Pancreas (tissue), 10 donors: ENCODE measurements at regions of chr9 and their contacts with region 1.

Region 1: DNA sequence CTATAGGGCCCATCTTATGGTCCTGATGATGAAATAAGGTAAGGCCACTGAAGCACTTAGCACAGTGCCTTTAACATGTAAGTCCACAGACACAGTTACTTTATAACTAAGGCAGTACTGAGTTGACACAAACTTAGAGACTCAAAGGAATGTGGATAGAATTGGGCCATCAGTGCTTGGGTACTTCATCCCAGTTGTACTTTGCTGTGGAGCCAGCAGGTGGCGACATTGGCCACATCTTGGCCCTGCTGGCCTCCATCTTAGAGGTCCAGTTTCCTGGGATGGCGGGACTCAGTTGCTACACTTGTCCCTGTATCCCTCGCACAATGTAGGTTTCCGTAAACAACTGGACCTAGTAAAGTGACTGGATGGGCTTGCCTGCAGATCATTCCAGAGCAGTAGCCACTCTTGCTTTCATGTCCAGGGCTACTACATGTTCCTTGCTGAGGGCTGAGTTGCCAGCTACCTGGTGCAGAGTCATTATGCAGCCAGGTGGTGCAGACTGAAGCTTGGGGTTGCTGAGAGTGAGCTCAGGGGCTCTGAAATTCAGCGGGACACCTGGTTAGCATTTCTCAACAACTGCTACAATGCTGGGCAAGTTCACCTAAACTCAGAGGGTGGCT is 10.6 kb downstream of the MTAP start:
- DNase-seq: peak; percentile 54 to 86 (median 78)
- ATAC-seq: peak; percentile 93 to 96 (median 96)
- H3K4me3 ChIP-seq: no peak overlapping the region
- H3K27ac ChIP-seq: no peak overlapping the region
- H3K4me1 ChIP-seq: peaks cover 0 to 13% (median 7%) of the 10 kb centered on the region in 3 donors
- H3K27me3 ChIP-seq: no peaks in the 10 kb centered on the region
- CTCF ChIP-seq: peak; percentile 75 to 85 (median 80)

Region 2: GRCh38 chr9:21965401-21965951 is 152.4 kb after region 1 on chr9:
- intact Hi-C with region 1: no loop called
- DNase-seq: peak; percentile 28 to 83 (median 58)
- ATAC-seq: peak; percentile 88 to 94 (median 92)
- H3K4me3 ChIP-seq: peak overlapping the region in 3 of 4 donors; percentile 0 to 45 (median 25)
- H3K27ac ChIP-seq: no peak overlapping the region
- H3K4me1 ChIP-seq: peaks cover 0 to 9% (median 0%) of the 10 kb centered on the region in 3 donors
- H3K27me3 ChIP-seq: peaks cover 6 to 65% (median 17%) of the 10 kb centered on the region in 4 donors
- CTCF ChIP-seq: no peak

Region 3: DNA sequence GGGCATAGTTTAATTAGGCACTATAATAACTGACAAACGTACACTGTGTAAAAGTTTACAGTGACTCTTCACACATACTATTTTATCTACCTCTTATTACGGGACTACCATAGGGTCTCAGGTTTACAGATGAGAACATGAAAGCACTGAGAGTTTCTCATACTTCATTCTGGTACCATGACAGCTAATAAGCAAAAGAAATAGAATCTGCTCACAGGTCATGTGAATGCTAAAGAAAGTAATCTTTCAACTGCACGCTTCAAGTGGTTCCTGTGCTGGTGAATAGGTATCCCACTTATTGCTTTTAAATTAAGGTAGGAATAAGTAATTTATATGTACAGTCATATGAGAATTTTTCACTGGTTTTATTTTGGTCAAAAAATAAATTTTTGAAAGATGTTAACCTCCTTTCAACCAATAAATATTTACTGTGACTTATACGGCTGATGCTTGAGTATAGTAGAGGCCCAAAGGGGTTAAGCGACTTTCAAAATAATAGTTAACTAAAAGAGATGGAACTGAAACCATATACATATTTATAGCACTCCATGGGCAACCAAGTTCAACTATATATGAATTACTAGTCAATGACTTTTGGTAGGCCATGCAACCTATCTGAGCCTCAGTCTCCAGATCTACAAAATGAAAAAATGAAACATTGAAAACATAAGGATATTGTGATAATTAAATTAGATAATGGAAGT is 173.1 kb after region 1 on chr9:
- intact Hi-C with region 1: no loop called
- DNase-seq: no peak
- ATAC-seq: no peak
- H3K4me3 ChIP-seq: no peak overlapping the region
- H3K27ac ChIP-seq: no peak overlapping the region
- H3K4me1 ChIP-seq: no peaks in the 10 kb centered on the region
- H3K27me3 ChIP-seq: peaks cover 6 to 61% (median 17%) of the 10 kb centered on the region in 4 donors
- CTCF ChIP-seq: no peak

Region 4: DNA sequence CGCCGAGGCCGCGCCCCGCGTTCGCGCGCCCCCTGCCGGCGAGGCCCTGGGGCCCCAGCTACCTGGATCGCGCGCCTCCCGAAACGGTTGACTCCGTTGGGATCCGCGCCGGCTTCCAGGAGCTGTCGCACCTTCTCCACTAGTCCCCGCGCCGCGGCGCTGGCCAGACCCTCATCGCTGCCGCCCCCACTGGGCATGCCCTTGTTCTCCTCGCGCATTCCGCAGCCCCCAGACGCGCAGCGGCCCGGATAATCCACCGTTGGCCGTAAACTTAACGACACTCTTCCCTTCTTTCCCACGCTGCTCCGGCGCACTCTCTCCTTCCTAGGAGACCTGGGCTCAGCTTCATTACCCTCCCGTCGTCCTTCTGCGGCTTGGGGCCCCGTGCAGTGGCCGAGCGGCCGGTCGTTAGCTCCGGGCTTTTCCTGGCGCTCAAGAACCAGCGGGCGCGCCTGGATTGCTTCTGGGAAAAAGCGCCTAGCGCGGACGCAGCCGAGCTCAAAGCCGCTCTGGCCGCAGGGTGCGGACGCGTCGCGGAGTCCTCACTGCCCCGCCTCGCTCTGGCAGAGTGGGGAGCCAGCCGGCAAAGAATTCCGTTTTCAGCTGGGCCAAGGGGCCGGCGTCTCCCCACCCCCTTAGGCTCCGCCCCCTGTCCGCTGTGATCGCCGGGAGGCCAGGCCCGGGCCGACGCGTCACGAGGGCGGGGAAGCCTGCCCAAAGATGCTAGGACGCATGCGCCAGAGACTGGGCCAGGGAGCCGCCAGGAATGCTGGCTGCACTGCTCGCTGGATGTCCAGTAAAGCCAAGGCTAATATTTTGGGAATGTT is 195.9 kb after region 1 on chr9 and contains the start of gene CDKN2B:
- intact Hi-C with region 1: loop called in 1 of 3 experiments (anchors 5 kb)
- DNase-seq: peak; percentile 94 to 98 (median 98)
- ATAC-seq: peak; percentile 97 to 99 (median 97)
- H3K4me3 ChIP-seq: peak within 1 kb of the TSS; percentile 48 to 71 (median 70)
- H3K27ac ChIP-seq: peak within 1 kb of the TSS; percentile 74 to 85 (median 84)
- H3K4me1 ChIP-seq: peaks cover 0 to 11% (median 7%) of the 10 kb centered on the region in 3 donors
- H3K27me3 ChIP-seq: peaks cover 0 to 10% (median 0%) of the 10 kb centered on the region in 4 donors
- CTCF ChIP-seq: peak; percentile 86 to 98 (median 97)
- total RNA-seq, gene CDKN2B: 0.59 to 13.9 (median 2.4) TPM

Region 5: GRCh38 chr9:22037954-22038690 is 225.1 kb after region 1 on chr9:
- intact Hi-C with region 1: loop called in 2 of 3 experiments (anchors 10 kb)
- DNase-seq: no peak
- ATAC-seq: peak; percentile 25 to 59 (median 50)
- H3K4me3 ChIP-seq: no peak overlapping the region
- H3K27ac ChIP-seq: no peak overlapping the region
- H3K4me1 ChIP-seq: peaks cover 14 to 19% (median 17%) of the 10 kb centered on the region in 3 donors
- H3K27me3 ChIP-seq: no peaks in the 10 kb centered on the region
- CTCF ChIP-seq: peak in 3 of 4 donors; percentile 29 to 39 (median 38)

Region 6: GRCh38 chr9:22216730-22217160 is 403.7 kb after region 1 on chr9:
- intact Hi-C with region 1: no loop called
- DNase-seq: no peak
- ATAC-seq: no peak
- H3K4me3 ChIP-seq: no peak overlapping the region
- H3K27ac ChIP-seq: no peak overlapping the region
- H3K4me1 ChIP-seq: no peaks in the 10 kb centered on the region
- H3K27me3 ChIP-seq: no peaks in the 10 kb centered on the region
- CTCF ChIP-seq: no peak

Region 7: DNA sequence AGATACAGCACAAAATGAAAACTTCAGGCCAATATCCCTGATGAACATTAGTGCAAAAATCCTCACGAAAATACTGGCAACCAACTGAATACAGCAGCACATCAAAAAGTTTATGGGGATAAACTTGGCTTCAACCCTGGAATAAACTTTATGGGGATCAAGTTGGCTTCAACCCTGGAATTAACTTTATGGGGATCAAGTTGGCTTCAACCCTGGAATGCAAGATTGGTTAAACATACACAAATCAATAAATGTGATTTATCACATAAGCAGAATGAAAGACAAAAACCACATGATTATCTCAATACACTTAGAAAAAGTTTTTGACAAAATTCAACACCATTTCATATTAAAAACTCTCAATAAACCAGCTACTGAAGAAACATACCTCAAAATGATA is 419.9 kb after region 1 on chr9:
- intact Hi-C with region 1: loop called in 1 of 3 experiments (anchors 5 kb)
- DNase-seq: no peak
- ATAC-seq: no peak
- H3K4me3 ChIP-seq: no peak overlapping the region
- H3K27ac ChIP-seq: no peak overlapping the region
- H3K4me1 ChIP-seq: no peaks in the 10 kb centered on the region
- H3K27me3 ChIP-seq: no peaks in the 10 kb centered on the region
- CTCF ChIP-seq: no peak